Transverse colon (tissue), 4 donors: ENCODE measurements at regions of chr2 and their contacts with region 1.

Region 1: DNA sequence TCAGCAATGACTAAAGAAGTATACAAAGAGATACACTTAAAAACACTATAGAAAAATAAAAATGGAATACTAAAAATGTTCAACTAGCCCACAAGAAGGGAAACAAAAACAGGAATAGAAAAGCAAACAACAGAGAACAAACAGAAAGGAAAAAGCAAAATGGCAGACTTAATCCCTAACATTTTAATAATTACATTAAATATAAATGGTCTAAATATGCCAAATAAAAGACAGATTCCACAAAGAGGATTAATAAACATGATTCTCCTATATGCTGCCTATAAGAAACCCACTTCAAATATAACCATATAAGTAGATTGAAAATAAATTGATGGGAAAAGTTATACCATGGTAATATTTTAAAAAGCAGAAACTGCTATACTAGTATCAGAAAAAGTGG is 83.5 kb upstream of the GPR45 start:
- DNase-seq: no peak
- H3K4me3 ChIP-seq: no peak overlapping the region
- H3K27ac ChIP-seq: no peak overlapping the region
- H3K4me1 ChIP-seq: no peaks in the 10 kb centered on the region
- H3K27me3 ChIP-seq: peaks cover 15% of the 10 kb centered on the region
- CTCF ChIP-seq: no peak
- EP300 ChIP-seq: no peak
- POLR2A ChIP-seq: no peak

Region 2: DNA sequence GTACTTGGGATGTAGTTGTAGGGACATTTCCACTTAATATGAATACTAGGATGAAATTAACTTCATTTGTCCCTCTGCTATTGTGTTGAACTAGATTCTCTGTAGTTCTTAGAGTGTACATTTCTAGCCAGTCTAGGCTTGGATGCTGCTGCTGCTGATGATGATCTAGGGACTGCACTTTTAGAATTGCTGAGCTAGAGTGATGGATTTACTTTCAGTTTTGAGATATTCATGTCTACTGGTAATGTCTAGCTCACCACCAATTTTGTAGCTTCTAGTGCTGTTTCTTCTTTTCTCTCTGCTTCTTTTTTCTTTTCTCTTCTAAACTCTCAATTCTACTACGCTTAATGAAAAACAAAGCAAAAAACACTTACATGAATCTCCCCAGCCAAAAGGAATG is 70.7 kb before region 1 on chr2:
- in situ Hi-C with region 1: no loop called
- intact Hi-C with region 1: no loop called
- DNase-seq: no peak
- H3K4me3 ChIP-seq: no peak overlapping the region
- H3K27ac ChIP-seq: no peak overlapping the region
- H3K4me1 ChIP-seq: no peaks in the 10 kb centered on the region
- H3K27me3 ChIP-seq: no peaks in the 10 kb centered on the region
- CTCF ChIP-seq: no peak
- EP300 ChIP-seq: no peak
- POLR2A ChIP-seq: no peak

Region 3: GRCh38 chr2:105194022-105194675 is 36.1 kb after region 1 on chr2:
- in situ Hi-C with region 1: no loop called
- intact Hi-C with region 1: loop called (anchors 1 kb)
- DNase-seq: no peak
- H3K4me3 ChIP-seq: no peak overlapping the region
- H3K27ac ChIP-seq: no peak overlapping the region
- H3K4me1 ChIP-seq: no peaks in the 10 kb centered on the region
- H3K27me3 ChIP-seq: no peaks in the 10 kb centered on the region
- CTCF ChIP-seq: no peak
- EP300 ChIP-seq: no peak
- POLR2A ChIP-seq: no peak

Region 4: DNA sequence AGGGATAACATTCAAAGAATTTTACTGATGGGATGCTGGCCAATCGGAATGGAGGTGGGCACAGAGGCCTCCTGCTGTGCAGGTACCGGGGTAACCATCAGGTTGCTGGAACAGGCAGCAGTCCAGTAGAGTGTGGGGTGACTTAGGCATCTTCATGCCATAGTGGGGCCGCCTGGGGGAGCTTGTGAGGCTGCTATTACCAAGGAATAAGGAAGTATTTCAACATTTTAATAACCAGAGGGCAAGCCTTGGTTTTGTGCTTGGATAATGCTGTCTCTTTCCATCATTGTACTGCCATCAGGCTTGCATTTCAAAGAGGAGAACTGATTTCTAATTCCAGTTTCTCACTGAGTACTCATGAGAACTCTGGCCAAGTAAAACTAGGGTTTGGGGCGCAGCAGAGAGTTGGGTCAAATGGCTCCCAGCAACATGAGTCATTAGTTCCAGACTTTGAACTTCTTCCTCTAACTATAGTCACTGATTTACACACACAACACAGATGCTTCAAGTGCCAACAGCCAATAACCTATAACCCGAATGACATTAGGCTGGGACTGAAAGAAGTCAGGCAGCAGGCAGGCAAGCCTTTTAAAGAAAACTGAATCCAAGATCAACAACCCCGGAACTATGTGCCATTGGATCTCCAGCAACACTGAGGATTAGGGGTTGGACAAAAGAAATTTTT is 296.9 kb after region 1 on chr2:
- in situ Hi-C with region 1: no loop called
- intact Hi-C with region 1: no loop called
- DNase-seq: peak; percentile 51
- H3K4me3 ChIP-seq: no peak overlapping the region
- H3K27ac ChIP-seq: peak overlapping the region; percentile 68 to 79 (median 76)
- H3K4me1 ChIP-seq: peaks cover 0 to 25% (median 15%) of the 10 kb centered on the region in 4 donors
- H3K27me3 ChIP-seq: no peaks in the 10 kb centered on the region
- CTCF ChIP-seq: peak in 4 of 5 experiments; percentile 19 to 52 (median 32)
- EP300 ChIP-seq: no peak
- POLR2A ChIP-seq: no peak

Region 5: DNA sequence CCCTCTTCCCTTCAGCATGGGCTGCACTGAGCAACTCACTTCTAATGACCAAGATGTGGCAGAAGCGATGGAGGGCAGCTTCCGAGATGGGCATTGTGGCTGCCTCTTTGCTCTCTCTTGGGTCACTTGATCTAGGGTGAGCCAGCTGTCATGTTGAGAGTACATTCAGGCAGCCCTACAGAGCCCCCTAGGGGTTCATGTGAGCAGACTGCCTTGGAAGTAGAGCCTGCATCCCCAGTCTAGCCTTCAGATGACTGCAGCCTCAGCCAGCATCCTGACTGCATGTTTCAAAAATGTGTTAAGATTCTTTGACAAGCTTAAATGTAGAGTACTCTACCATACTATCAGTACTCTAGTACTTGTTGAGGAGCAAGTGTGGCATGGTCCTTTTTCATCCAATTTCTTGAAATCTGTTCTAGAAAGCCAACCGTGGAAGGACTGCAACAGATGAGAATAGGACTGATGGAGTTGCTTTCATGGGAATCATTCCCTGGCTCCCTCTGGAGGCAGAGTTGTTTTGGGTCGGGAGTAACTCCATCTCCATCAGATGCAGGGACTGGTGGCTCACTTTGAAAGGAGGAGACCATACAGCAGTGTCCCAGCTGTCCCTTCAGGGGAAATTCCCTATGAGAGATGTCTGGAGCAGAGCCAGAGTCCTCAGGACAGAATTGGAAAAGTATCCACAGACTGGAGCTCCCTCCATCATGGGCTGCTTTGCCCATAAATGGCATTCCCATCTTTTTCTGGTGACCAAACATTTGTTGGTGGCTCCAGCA is 730.8 kb after region 1 on chr2:
- in situ Hi-C with region 1: no loop called
- intact Hi-C with region 1: no loop called
- DNase-seq: no peak
- H3K4me3 ChIP-seq: no peak overlapping the region
- H3K27ac ChIP-seq: no peak overlapping the region
- H3K4me1 ChIP-seq: peaks cover 10 to 31% (median 12%) of the 10 kb centered on the region in 4 donors
- H3K27me3 ChIP-seq: no peaks in the 10 kb centered on the region
- CTCF ChIP-seq: no peak
- EP300 ChIP-seq: no peak
- POLR2A ChIP-seq: no peak